ENCODE measurements at regions of chr12 and their contacts with region 1.

Region 1: DNA sequence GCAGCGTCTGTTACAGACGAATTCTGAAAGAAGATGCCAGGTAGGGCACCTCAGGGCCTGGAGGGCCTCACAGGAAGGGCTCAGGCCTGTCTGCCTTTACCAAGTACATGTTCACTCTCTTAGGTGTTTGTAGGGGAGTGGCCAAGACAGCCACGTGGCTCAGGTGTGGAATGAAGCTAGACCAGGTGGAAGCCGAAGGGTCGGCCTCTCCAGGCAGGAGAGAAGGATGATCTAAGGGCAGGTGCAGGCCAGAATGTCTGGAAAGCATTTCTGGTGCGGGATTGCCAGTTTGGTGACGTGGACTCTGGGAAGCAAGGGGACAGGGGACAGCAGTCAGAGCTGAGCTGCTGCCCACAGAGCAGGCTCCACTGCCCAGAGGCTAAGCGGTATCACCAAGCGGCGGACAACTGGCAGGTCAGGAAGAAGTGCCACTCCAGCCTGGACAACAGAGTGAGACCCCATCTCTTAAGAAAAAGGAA is 32.0 kb upstream of the MMP17 start:
- DNase-seq: peak in 1 of 2 experiments; percentile 65
- H3K4me3 ChIP-seq: no peak overlapping the region
- H3K27ac ChIP-seq: peak overlapping the region; percentile 31; the same call in 1 of the 2 replicates
- H3K4me1 ChIP-seq: peaks cover 0 to 17% (median 12%) of the 10 kb centered on the region in 4 experiments; a peak in 6 of 7 replicates
- H3K27me3 ChIP-seq: no peaks in the 10 kb centered on the region
- CTCF ChIP-seq: no peak
- EP300 ChIP-seq: no peak
- POLR2A ChIP-seq: no peak
- RAD21 ChIP-seq: no peak

Region 2: DNA sequence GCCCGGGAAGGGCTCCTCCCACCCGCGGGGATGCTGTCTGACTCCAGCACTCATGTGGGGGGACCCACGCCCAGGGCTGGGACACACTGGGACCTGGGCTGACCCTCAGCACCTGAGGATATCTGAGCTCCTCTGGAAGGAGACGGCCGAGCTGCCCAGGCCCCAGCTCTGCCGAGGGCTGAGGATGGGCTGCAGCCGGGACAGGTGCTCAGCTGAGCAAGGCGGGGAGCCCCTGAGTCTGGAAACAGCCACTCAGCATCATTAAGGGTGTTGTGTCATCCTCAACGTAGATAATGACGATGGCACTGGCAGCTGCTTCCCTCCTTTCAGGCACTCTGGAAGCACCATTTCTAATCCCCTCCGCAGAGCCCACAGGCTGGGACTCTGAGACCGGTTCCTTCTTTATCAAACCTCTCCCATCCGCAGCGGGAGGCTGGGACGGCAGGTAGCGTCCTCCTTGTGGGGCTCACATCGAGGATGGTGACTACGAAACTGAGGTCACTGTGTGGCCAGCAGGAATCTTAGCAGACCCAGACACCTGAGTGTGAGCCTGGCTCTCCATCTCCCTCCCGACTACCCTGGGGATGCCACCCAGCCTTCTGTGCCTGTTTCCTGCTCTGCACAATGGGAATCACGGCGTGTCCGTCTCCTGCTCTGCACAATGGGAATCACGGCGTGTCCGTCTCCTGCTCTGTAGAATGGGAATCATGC is 112.0 kb before region 1 on chr12:
- CTCF ChIA-PET with region 1: no interaction called
- POLR2A ChIA-PET with region 1: no interaction called
- DNase-seq: no peak
- H3K4me3 ChIP-seq: no peak overlapping the region
- H3K27ac ChIP-seq: no peak overlapping the region
- H3K4me1 ChIP-seq: peaks cover 0 to 15% (median 7%) of the 10 kb centered on the region in 4 experiments; a peak in 5 of 7 replicates
- H3K27me3 ChIP-seq: no peaks in the 10 kb centered on the region
- CTCF ChIP-seq: no peak
- EP300 ChIP-seq: no peak
- POLR2A ChIP-seq: no peak
- RAD21 ChIP-seq: no peak

Region 3: DNA sequence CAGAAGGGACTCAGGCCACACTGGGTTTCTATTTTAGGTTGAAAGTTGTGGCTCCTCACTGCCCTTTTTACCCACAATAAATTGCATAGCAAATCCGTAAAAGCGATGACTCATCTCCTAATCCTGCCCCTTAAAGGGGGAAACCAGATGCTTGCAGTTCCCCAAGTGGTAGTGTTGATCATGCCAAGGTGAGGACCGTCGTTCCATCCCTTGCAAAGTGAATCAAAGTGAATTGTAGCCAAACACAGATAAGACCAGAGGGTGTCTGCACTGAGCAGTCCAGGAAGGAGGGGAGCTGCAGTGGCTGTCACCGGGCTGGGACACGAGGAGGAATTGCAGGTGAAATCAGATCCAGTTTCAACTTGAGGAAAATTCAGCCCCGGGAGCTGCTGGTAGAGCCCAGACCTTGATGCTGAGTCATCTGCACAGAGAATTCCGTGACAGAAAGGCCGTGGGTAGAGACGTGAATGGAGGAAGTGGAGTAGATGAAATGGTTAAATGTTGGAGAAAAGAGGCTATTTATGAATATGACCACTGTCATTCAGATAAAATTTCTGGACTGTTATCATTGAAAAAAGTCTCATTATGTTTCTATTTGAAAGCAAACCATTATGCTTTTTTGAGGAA is 12.2 kb before region 1 on chr12:
- CTCF ChIA-PET with region 1: interaction called, 24 read pairs
- POLR2A ChIA-PET with region 1: interaction called, 13 read pairs
- DNase-seq: no peak
- H3K4me3 ChIP-seq: no peak overlapping the region
- H3K27ac ChIP-seq: no peak overlapping the region
- H3K4me1 ChIP-seq: peaks cover 8 to 20% (median 12%) of the 10 kb centered on the region in 4 experiments
- H3K27me3 ChIP-seq: no peaks in the 10 kb centered on the region
- CTCF ChIP-seq: no peak
- EP300 ChIP-seq: no peak
- POLR2A ChIP-seq: no peak
- RAD21 ChIP-seq: no peak; a peak in 1 of 4 replicates

Region 4: GRCh38 chr12:131872185-131873051 is 76.2 kb after region 1 on chr12:
- CTCF ChIA-PET with region 1: no interaction called
- POLR2A ChIA-PET with region 1: no interaction called
- DNase-seq: no peak
- H3K4me3 ChIP-seq: no peak overlapping the region
- H3K27ac ChIP-seq: no peak overlapping the region
- H3K4me1 ChIP-seq: no peaks in the 10 kb centered on the region
- H3K27me3 ChIP-seq: no peaks in the 10 kb centered on the region
- CTCF ChIP-seq: no peak
- EP300 ChIP-seq: no peak
- POLR2A ChIP-seq: no peak
- RAD21 ChIP-seq: no peak

Measured in H1 (cell line).